ENCODE measurements at regions of chr16 and their contacts with region 1.

Region 1: DNA sequence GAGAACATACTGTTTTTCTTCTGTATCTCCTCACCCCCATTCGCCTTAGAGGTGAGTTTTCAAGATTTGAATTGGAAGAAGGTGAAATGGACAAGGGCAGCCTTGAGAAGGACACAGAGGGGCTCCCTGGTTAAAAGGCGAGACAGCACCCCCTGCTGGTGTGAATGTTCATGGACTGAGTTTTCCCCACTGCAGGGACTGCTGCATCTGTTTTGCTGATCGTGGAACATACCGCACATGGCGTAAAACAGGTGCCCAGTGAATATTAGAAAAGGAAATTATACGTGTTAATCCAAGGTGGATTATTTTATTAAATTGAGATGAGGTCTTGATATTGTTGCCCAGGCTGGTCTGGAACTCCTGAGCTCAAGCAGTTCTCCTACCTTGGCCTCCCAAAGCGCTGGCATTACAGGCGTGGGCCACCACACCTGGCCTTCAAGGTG is 54.5 kb downstream of the NDE1 start:
- DNase-seq: peak; percentile 60 to 89 (median 79)
- H3K4me3 ChIP-seq: no peak overlapping the region
- H3K27ac ChIP-seq: peak overlapping the region in 35 of 59 donors; percentile 4 to 78 (median 44)
- H3K27me3 ChIP-seq: no peaks in the 10 kb centered on the region
- CTCF ChIP-seq: peak; percentile 74 to 95 (median 88)

Region 2: DNA sequence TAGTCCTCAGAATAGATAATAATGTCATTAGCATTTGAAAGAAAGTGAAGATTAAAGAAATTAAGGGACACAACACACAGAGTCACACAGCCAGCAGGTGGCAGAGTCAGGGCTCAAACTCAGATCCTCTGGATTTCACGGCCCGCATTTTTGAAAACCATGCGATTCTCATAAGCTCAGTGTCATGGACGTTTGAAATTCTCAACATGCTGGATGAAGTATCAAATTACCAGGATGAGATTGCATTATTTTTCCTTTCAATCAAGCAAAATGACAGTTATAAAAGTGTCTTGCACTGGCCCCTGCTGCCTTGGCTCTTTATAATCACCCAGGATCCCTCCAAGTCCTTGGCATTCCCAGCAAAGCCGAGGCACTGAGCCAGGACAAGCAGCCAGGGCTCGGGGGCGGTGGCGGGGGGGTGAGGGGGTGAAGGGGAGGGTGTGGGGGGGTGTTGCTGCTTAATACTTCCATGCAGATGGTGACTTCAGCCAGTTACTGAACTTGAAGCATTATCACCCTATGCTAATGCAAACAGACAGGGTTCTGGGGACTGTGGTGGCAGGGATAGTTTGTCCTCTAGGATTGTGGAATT is 276.8 kb before region 1 on chr16:
- intact Hi-C with region 1: loop called in 1 of 2 experiments (anchors 2 kb)
- DNase-seq: peak; percentile 40 to 78 (median 58)
- H3K4me3 ChIP-seq: peak overlapping the region in 19 of 59 donors; percentile 4 to 38 (median 20)
- H3K27ac ChIP-seq: peak overlapping the region in 14 of 59 donors; percentile 2 to 77 (median 37)
- H3K27me3 ChIP-seq: no peaks in the 10 kb centered on the region
- CTCF ChIP-seq: peak; percentile 47 to 78 (median 68)

Region 3: GRCh38 chr16:15523092-15523541 is 181.4 kb before region 1 on chr16:
- intact Hi-C with region 1: loop called in 1 of 2 experiments (anchors 2 kb)
- DNase-seq: peak; percentile 11 to 73 (median 58)
- H3K4me3 ChIP-seq: peak overlapping the region in 1 of 59 donors; percentile 3
- H3K27ac ChIP-seq: peak overlapping the region in 45 of 59 donors; percentile 2 to 80 (median 43)
- H3K27me3 ChIP-seq: no peaks in the 10 kb centered on the region
- CTCF ChIP-seq: peak in 54 of 56 donors; percentile 23 to 78 (median 54)

Region 4: GRCh38 chr16:15618392-15618791 is 86.2 kb before region 1 on chr16:
- intact Hi-C with region 1: no loop called
- DNase-seq: no peak
- H3K4me3 ChIP-seq: no peak overlapping the region
- H3K27ac ChIP-seq: no peak overlapping the region
- H3K27me3 ChIP-seq: no peaks in the 10 kb centered on the region
- CTCF ChIP-seq: no peak

Region 5: DNA sequence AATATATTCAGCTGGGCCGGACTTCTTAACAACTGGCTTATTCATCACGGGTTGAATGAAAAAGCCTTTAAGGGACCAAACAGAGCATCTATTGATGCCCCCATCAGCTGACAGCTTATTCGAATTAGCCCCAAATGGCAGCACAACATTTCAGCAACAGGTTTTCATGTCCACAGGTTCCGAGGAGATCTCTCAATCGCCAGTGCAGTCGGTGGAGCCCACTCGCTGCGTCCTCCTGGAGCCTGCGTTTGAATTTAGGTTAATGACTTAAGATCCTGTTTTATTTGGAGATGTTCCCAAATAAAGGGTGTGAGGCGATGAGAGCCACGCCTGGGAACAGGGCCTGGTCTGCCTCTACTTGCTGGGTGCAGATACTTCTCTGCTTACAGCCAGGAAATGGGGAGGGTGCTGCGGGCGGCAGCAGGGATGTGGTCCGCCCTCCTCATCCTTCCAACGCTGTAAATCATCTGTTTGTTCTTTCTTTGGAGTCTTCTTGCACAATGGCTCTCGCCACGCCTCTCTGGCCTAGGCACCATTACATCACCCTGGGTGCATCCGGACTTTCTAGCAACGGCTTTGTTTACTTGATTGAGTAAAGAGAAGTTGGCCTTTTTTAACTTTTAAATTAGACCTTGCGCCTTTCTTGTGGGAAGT is 31.9 kb before region 1 on chr16:
- intact Hi-C with region 1: loop called in 1 of 2 experiments (anchors 2 kb)
- DNase-seq: peak; percentile 7 to 91 (median 78)
- H3K4me3 ChIP-seq: peak overlapping the region in 54 of 59 donors; percentile 4 to 55 (median 28)
- H3K27ac ChIP-seq: peak overlapping the region; percentile 81 to 100 (median 98)
- H3K27me3 ChIP-seq: no peaks in the 10 kb centered on the region
- CTCF ChIP-seq: peak in 8 of 56 donors; percentile 7 to 32 (median 12)